Left cardiac atrium (tissue), 4 donors: ENCODE measurements at regions of chr2 and their contacts with region 1.

Region 1: DNA sequence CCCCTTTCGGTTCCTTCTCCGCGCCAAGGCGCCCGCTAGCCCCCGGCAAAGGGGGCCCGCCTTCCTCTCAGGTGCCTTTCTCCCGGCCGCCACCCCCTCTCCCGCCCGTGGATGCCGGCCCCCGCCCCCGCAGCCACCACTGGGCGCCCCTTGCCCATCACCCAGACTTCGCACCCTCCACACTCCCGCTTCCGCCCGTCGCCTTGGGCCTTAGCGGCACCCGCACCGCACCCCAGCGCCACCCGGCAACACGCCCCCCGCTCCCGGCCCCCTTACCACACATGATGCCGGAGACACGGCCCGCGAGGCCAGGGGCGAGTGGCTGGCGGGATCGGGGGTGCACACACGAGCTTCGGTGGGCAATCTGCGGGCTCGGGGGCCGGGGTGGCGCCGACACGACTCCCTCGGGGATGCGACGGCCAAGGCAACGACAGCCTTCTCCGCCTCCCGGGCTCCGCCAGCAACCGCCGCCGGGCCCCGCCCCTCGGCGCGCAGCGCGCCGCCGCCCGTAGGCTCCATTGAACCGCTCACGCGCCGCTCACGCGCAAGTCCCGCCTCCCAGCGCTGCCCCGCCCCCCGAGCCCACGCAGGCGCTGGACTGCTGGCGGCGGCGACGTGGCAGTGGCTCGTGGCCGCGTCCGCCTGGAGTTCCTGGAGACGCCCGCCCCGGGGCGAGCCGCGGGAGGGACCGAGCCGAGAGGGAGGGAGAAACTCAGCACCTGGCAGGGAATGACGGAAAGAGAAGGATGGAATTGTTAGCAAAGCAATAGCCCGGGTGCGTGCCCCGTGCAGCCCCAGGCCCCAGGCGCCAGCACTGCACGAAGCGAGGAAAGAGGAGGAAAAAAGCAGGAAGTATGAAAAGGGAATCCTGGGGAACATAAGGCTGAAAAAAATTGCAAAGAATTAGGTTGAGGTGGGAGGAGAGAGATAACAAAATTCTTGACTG is at the start of gene GFPT1:
- DNase-seq: peak; percentile 96
- ATAC-seq: peak; percentile 99
- total RNA-seq, gene GFPT1: 40.0 to 65.1 TPM

Region 2: GRCh38 chr2:69095305-69095704 is 291.8 kb before region 1 on chr2:
- intact Hi-C with region 1: no loop called
- DNase-seq: no peak
- ATAC-seq: peak in 1 of 2 donors; percentile 91

Region 3: DNA sequence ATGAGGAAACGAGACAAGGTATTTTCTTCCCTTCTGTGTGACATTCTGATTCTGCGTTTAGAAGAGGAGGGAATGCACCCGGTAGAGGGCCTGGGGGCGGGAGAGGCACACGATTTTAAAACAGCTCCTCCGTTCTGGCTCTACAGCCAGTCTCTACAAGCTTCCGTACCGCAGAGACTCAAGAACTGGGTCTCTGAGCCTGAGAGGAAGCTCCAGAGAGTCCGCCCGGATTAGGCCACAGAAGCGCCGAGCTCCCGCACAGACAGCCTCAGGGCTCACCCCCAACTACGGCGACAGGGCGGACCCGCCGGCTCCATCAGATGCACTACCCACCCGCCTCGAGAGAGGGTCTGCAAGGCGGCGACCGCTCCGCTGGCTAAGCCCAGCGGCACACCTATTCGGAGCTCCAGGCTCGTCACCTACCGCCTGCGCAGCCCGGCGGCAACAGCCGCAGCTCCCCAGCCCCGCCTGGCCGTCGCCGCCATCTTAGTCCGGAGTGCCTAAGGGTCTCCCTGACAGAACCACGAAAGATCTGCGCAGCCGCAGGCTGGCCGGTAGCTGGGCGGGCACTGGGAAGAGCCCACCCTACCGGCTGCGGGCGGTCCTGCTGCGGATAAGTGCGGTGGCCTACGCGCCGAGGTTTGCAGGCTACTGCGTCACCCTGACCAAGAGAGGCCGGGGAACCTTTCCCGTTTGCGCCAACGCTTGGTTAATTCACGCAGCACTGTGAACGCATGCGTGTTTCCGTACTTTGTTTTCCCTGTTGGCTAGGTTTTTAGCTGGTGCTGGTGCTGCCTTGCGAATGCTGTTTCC is 50.1 kb after region 1 on chr2 and contains the start of gene NFU1:
- intact Hi-C with region 1: loop called in 1 of 2 experiments (anchors 2 kb)
- DNase-seq: peak; percentile 95
- ATAC-seq: peak; percentile 98 to 99
- total RNA-seq, gene NFU1: 63.0 to 64.8 TPM